ENCODE measurements at regions of chr6 and their contacts with region 1.

Region 1: DNA sequence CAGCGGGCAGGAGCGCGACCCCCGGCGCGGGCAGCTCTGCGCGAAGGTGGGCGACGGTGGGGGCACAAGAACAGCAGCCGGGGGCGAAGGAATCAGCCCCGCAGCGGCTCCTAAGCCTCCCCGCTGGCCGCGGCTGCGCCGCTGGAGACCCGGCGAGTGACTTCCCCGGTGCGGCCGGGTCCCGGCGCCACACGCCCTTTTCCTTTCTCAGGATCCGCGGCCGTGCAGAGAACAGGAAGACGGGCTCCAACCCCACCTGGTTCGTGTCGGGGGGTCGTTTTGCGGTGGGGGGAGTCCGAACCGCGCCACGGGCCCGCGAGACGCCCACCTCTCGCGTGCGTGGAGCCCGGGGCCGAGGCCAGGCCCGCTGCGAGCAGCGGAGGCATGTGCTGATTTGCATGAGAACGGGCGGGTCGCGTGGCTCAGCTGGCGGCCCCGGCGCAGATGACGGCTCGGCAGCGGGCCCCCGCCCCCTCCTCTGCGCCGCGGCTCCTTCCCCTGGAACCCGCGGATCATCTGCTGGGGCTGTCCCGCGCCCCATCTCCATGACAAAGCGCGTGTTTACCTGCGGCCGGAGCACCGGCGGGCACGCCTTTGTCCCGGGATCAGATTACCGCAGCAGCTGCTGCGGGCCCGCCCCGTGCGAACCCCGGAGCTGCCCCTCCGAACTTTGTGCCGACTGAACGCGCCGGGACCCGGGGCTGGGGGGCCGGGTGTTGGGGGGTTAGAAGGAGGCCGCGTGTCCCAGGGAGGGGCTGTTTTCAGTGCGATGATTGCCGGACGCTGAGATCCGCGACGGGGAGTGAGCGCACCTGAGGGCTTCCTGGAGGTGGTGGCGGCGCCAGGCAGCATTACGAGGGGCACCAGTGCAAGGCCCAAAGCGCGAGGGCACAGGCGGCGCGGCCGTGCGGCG is 4.9 kb upstream of the DLL1 start:
- DNase-seq: peak; percentile 59
- ATAC-seq: peak; percentile 32

Region 2: GRCh38 chr6:169831450-169832246 is 464.1 kb before region 1 on chr6:
- intact Hi-C with region 1: loop called (anchors 5 kb)
- DNase-seq: peak; percentile 83
- ATAC-seq: peak; percentile 95

Region 3: DNA sequence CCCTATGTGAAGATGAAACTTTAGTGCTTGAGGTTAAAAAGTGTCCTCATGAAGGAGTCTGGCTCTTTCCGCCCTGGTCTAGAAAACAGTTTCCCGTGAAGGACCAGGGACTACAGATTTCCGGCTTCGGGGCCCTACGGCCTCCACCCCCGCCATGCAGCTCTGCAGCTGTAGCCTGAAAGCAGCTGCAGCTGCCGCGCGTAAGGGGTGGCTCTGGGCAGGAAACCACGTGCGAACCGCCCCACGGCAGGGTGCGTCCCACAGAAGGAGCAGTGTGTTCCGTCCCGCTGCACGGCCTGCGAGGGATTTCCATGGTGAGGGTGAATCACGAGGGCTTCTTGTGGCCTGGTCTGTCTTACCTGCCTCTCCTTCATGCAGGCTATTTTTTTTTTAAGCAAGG is 427.3 kb before region 1 on chr6:
- intact Hi-C with region 1: no loop called
- DNase-seq: peak; percentile 66
- ATAC-seq: peak; percentile 25

Measured in Right ventricle myocardium superior (tissue), 1 donor.